ENCODE measurements at regions of chrX and their contacts with region 1.

Region 1: DNA sequence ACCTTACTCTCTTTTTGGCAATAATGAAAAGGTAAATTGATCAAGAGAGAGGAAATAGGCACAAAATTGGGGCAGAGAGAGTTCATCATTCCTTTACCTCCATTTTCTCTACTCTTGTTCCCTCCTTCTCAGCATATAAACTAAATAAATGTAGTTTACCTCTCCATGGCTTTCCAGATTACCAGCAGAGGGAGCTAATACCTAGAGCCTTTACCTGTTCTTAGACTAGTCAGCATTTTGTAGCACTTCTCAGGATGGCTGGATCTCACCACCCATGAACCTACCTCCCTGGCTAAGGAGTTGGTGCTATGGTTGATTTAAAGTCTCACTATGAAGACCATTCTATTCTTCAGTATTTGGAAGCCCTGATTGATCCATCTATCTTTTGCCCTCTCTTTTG is 15.7 kb downstream of the OFD1 start:
- DNase-seq: no peak
- H3K4me3 ChIP-seq: no peak overlapping the region
- H3K27ac ChIP-seq: no peak overlapping the region
- H3K4me1 ChIP-seq: no peaks in the 10 kb centered on the region
- H3K27me3 ChIP-seq: no peaks in the 10 kb centered on the region
- CTCF ChIP-seq: no peak
- EP300 ChIP-seq: no peak
- POLR2A ChIP-seq: no peak

Region 2: DNA sequence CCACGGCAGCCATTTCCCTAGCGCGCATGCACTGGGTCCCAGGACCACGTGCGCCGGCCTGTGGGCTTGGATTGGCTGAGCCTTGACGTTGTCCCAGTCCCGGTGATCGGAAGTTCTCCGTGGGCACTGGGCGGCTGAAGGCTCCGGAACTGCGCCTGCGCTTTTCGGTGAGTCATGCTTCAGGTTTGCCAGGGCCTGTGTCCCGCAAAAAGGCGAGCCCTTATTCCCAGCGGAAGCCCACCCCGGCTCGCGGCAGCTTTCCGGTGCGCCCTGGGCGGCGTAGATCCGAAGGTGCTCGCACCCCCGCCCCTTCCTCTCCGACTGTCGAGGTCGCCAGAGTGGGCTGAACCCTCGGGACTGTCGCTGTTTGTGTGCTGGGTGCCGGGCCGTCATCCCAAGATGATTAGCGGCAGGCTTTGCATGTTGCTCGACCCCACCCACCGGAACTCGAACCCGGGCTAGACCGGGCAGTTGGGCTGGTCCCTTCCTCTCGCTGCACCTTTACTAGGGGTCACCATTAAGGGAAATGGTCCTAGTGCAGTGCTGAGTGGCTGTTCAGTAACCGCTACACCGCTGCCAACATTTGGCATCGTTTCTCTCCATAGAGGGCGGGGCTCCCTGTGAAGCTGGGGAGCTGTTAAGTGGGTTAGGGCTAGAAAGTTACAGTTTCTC is 97.0 kb before region 1 on chrX and contains the start of gene TCEANC:
- intact Hi-C with region 1: loop called in 2 of 4 experiments (anchors 2 to 5 kb)
- DNase-seq: peak; percentile 97 to 99 (median 98)
- H3K4me3 ChIP-seq: peak within 1 kb of the TSS; percentile 59
- H3K27ac ChIP-seq: peak within 1 kb of the TSS; percentile 59 to 87
- H3K4me1 ChIP-seq: peaks cover 4% of the 10 kb centered on the region
- H3K27me3 ChIP-seq: no peaks in the 10 kb centered on the region
- CTCF ChIP-seq: peak in 1 of 3 donors; percentile 21
- EP300 ChIP-seq: no peak
- POLR2A ChIP-seq: peak; percentile 81
- total RNA-seq, gene TCEANC: 3.1 to 9.2 (median 4.8) TPM

Region 3: DNA sequence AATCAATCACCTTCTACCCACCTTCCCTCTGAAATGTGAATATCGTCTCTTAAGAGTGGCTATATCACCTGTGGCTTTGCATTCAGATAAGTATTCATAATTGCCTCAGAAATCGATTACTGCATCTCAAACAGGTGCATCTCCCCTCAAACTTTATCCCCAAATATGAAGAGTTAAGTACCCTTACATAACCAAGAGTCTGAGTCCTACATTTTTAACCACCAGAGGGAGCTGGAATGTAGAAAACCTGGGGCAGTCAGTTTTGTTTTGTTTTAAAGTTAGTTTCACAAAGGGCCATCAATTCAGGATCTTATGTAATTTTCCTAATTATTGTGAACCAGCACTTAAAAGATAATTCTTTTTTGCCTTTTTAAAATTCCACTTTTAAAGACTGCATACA is 91.6 kb before region 1 on chrX:
- intact Hi-C with region 1: loop called in 2 of 4 experiments (anchors 2 to 5 kb)
- DNase-seq: no peak
- H3K4me3 ChIP-seq: no peak overlapping the region
- H3K27ac ChIP-seq: peak overlapping the region in 1 of 2 donors; percentile 42
- H3K4me1 ChIP-seq: peaks cover 3% of the 10 kb centered on the region
- H3K27me3 ChIP-seq: no peaks in the 10 kb centered on the region
- CTCF ChIP-seq: peak; percentile 70 to 82 (median 79)
- EP300 ChIP-seq: no peak
- POLR2A ChIP-seq: no peak

Region 4: GRCh38 chrX:14015294-14015693 is 265.1 kb after region 1 on chrX:
- intact Hi-C with region 1: loop called in 2 of 4 experiments (anchors 10 kb)
- DNase-seq: no peak
- H3K4me3 ChIP-seq: no peak overlapping the region
- H3K27ac ChIP-seq: no peak overlapping the region
- H3K4me1 ChIP-seq: peaks cover 2% of the 10 kb centered on the region
- H3K27me3 ChIP-seq: no peaks in the 10 kb centered on the region
- CTCF ChIP-seq: no peak
- EP300 ChIP-seq: no peak
- POLR2A ChIP-seq: no peak

Region 5: GRCh38 chrX:14064626-14065432 is 314.6 kb after region 1 on chrX:
- intact Hi-C with region 1: no loop called
- DNase-seq: no peak
- H3K4me3 ChIP-seq: no peak overlapping the region
- H3K27ac ChIP-seq: no peak overlapping the region
- H3K4me1 ChIP-seq: no peaks in the 10 kb centered on the region
- H3K27me3 ChIP-seq: no peaks in the 10 kb centered on the region
- CTCF ChIP-seq: no peak
- EP300 ChIP-seq: no peak
- POLR2A ChIP-seq: no peak

Measured in ovary (tissue), 10 donors.